Esophagus muscularis mucosa (tissue), 4 donors: ENCODE measurements at regions of chr4 and their contacts with region 1.

Region 1: DNA sequence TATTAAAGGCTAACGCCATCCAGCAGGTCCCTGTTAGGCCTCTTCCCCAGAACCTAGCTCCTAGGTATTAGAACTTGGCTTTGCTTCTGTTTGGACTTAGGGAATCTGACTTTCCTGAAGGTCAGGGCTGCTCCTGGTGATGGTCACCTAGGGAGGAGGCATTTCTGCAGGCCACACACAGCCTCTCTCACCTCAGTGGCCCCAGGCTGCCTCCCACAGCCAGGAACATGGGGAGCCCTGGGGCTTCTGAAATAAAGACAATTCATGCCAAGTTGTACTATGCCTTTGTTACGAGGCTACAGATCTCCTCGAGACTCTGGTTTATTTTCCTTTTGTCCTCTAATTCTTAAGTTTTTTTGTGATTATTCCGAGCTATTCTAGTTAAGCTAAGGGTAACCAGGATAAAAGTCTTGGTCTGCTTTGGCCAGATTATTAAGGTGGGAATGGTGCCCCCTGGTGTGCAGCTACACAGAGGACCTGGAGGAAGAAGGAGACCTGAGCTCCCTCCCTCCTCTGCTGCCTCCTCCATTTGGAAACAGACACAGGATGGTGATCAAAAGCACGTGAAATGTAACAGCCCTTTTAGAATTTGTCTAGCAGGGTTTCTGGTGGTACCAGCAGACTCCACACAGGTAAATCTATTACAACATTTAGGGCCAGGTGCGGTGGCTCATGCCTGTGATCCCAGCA is 131.0 kb downstream of the DCLK2 start:
- DNase-seq: no peak
- H3K4me3 ChIP-seq: no peak overlapping the region
- H3K27ac ChIP-seq: no peak overlapping the region
- H3K4me1 ChIP-seq: peaks cover 16 to 25% (median 20%) of the 10 kb centered on the region in 4 donors
- H3K27me3 ChIP-seq: no peaks in the 10 kb centered on the region
- CTCF ChIP-seq: peak; percentile 60 to 66 (median 65)
- EP300 ChIP-seq: no peak
- POLR2A ChIP-seq: no peak

Region 2: DNA sequence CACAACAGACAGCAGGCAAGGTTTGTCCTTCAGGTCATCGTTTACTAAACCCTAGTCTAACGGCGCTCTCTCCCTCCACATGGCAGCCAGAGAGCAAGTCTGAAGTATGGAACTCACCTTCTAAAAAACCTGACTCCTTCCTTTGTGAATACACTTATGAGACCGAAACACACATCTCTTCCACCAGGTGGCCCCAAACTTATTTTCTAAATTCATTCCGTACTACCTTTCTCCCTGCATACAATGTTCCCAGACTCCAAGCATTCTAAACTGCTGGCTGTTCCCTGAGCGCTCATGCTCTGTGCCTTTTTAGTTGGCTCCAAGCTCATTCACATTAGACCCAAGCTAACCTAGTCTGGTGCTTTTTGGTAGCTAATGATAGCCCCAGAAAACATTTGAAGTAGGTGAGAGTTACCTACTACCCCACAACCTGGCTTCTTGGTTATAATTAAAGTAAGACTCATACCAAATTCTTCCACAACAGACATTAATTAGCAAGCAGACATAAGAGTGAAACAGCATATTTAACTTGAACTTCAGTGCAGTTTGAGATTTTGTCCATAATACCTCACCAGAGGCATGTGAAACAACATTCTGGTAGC is 198.7 kb before region 1 on chr4:
- intact Hi-C with region 1: loop called (anchors 2 kb)
- DNase-seq: no peak
- H3K4me3 ChIP-seq: no peak overlapping the region
- H3K27ac ChIP-seq: no peak overlapping the region
- H3K4me1 ChIP-seq: peaks cover 10 to 46% (median 44%) of the 10 kb centered on the region in 4 donors
- H3K27me3 ChIP-seq: no peaks in the 10 kb centered on the region
- CTCF ChIP-seq: peak; percentile 63 to 75 (median 67)
- EP300 ChIP-seq: no peak
- POLR2A ChIP-seq: no peak

Region 3: GRCh38 chr4:150078637-150079581 is 130.4 kb before region 1 on chr4:
- intact Hi-C with region 1: loop called (anchors 5 kb)
- DNase-seq: peak; percentile 93
- H3K4me3 ChIP-seq: peak overlapping the region; percentile 66 to 79 (median 76)
- H3K27ac ChIP-seq: peak overlapping the region; percentile 90 to 93 (median 92)
- H3K4me1 ChIP-seq: peaks cover 23 to 54% (median 41%) of the 10 kb centered on the region in 4 donors
- H3K27me3 ChIP-seq: no peaks in the 10 kb centered on the region
- CTCF ChIP-seq: peak in 1 of 3 experiments; percentile 25
- EP300 ChIP-seq: no peak
- POLR2A ChIP-seq: no peak

Region 4: GRCh38 chr4:150363721-150364688 is 154.7 kb after region 1 on chr4:
- intact Hi-C with region 1: no loop called
- DNase-seq: no peak
- H3K4me3 ChIP-seq: no peak overlapping the region
- H3K27ac ChIP-seq: no peak overlapping the region
- H3K4me1 ChIP-seq: peaks cover 0 to 12% (median 5%) of the 10 kb centered on the region in 4 donors
- H3K27me3 ChIP-seq: no peaks in the 10 kb centered on the region
- CTCF ChIP-seq: no peak
- EP300 ChIP-seq: no peak
- POLR2A ChIP-seq: no peak

Region 5: DNA sequence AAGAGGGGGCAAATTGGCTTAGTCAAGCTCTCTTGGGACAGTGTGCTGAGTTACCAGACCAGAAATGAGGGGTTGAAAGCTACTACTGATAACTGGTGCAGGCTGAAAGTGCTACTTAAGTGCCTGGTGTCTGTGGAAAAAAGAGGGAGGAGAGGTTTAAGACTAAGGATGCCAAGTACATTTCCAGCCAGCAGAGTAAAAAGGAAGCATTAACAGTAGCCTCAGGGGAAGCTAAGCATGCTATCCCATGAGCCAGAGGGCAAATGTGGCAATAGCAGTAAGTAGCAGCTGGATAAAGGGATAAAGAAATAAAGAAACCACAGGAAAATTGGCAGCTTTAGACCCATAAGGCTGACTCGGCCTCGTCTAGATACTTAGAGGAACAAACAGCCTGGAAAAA is 176.3 kb after region 1 on chr4:
- intact Hi-C with region 1: no loop called
- DNase-seq: no peak
- H3K4me3 ChIP-seq: no peak overlapping the region
- H3K27ac ChIP-seq: no peak overlapping the region
- H3K4me1 ChIP-seq: no peaks in the 10 kb centered on the region
- H3K27me3 ChIP-seq: no peaks in the 10 kb centered on the region
- CTCF ChIP-seq: no peak
- EP300 ChIP-seq: no peak
- POLR2A ChIP-seq: no peak